Adrenal gland (tissue), 19 donors: ENCODE measurements at regions of chr14 and their contacts with region 1.

Region 1: DNA sequence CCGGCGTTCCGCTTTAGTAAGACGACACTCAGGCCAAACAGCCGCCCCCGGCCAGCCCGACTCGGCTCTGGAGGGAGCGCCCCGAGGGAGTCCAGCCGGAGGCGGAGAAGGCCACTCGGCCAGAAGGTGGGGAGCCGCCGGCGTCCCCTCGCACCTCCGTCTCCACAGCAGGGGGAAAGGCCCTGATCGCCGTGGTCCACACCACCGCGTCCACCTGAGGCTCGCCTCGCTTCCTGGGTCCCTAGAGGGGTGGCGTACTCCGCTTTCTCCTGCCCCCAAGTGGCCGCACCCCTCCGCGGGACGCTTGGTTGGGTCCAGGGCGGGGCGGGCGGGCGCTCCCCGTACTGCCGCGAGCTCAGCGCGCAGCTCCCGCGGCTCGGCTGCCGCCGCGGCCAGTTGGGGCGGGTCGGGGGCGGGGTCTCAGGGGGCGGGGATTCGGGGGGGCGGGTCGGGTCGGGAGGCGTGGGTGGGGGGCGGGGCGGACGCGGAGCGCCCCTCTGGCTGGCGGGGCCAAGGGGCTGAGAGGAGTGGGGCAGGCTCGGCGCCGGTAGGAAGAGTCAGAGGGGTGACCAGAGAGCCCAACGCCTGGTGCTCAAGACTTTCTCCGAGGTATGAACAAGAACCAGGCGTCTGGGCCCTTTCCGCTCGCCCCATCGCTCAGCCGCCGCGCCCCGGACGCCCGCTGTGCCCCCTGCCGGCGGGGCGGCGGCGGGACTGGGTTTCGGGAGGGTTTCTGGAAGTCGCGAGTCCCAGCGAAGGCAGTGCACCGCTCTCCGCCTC is at the start of gene FRMD6:
- DNase-seq: peak; percentile 85 to 90 (median 87)
- H3K4me3 ChIP-seq: peak within 1 kb of the TSS; percentile 71 to 80 (median 75)
- H3K27ac ChIP-seq: peak within 1 kb of the TSS; percentile 39 to 99 (median 95)
- H3K4me1 ChIP-seq: peaks cover 6 to 30% of the 10 kb centered on the region in 2 donors
- H3K27me3 ChIP-seq: no peaks in the 10 kb centered on the region
- CTCF ChIP-seq: peak; percentile 58 to 88 (median 73)
- POLR2A ChIP-seq: peak; percentile 69 to 81
- total RNA-seq, gene FRMD6: 15.3 to 42.6 (median 28.1) TPM

Region 2: DNA sequence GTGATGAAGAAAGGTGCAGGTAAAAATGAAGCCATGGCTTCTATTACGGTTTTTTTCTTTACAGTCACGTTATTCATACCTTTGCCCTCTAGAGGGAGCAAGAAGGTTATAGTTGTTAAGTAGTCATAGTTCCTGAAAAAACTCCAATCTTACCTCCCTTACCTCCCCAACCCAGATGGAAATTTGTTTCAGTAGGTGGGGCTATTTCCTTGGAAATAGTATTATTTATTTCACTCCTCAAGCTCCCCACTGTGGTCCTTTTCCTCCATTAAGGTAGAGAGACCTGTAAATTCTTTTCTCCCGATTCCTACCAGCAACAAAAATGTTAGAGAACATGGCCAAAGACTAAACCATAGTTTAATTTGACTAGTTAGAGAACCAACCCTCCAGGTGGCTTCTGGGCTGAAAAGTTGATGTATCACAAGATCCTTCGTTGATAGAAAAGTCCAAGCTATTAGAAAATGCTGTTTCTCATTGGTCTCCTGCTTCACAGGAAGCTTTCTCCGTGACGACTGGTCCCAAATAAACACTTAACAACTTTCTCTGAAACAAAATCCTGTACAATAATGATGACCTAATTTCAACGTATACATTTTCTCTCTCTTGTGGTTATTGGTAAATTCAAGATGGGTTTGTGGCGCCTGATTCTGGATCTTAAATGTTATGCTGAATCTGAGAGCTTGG is 368.0 kb before region 1 on chr14:
- intact Hi-C with region 1: loop called in 1 of 2 experiments (anchors 10 kb)
- DNase-seq: peak in 1 of 7 donors; percentile 3
- H3K4me3 ChIP-seq: no peak overlapping the region
- H3K27ac ChIP-seq: no peak overlapping the region
- H3K4me1 ChIP-seq: no peaks in the 10 kb centered on the region
- H3K27me3 ChIP-seq: no peaks in the 10 kb centered on the region
- CTCF ChIP-seq: peak; percentile 53 to 96 (median 84)
- POLR2A ChIP-seq: no peak